OCI-LY7 (cell line): ENCODE measurements at regions of chr11 and their contacts with region 1.

Region 1: GRCh38 chr11:111565114-111565720 is 24.7 kb downstream of the LAYN start:
- DNase-seq: peak; percentile 83
- H3K4me3 ChIP-seq: no peak overlapping the region
- H3K27ac ChIP-seq: no peak overlapping the region
- H3K4me1 ChIP-seq: no peaks in the 10 kb centered on the region
- CTCF ChIP-seq: peak; percentile 93

Region 2: DNA sequence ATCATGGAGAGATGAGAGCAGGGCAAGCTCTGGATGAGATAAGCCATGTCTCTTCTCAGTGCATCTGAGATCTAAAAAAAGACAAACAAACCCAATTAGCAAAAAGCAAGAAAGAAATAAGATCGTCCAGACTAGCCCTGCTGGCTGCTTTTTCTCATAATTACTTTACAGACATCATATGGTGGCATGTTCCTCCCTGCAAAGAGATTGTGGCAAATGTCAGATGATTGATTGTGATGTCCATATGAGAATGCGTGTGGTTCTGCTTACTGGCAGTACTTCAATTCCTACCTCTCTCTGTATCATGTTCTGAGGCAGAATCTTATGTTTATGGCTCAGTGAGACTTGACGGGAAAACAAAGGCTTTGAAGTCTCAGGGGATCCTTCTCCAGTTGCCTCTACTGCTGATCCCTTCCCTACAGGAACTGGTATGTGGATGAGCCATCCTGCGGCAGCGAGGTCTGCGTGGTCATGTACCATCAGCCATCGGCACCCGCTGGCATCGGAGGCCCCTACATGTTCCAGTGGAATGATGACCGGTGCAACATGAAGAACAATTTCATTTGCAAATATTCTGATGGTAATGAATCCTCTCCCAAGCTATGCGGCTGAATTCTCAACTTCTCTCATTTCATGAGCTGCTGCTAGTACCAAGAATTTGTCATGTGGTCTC is 15.9 kb before region 1 on chr11:
- CTCF ChIA-PET with region 1: no interaction called
- POLR2A ChIA-PET with region 1: interaction called, 10 read pairs
- intact Hi-C with region 1: no loop called
- DNase-seq: no peak
- H3K4me3 ChIP-seq: no peak overlapping the region
- H3K27ac ChIP-seq: no peak overlapping the region
- H3K4me1 ChIP-seq: peaks cover 11% of the 10 kb centered on the region
- CTCF ChIP-seq: no peak

Region 3: GRCh38 chr11:111575740-111576139 is 10.5 kb after region 1 on chr11:
- CTCF ChIA-PET with region 1: no interaction called
- POLR2A ChIA-PET with region 1: no interaction called
- intact Hi-C with region 1: no loop called
- DNase-seq: no peak
- H3K4me3 ChIP-seq: no peak overlapping the region
- H3K27ac ChIP-seq: no peak overlapping the region
- H3K4me1 ChIP-seq: peaks cover 15% of the 10 kb centered on the region
- CTCF ChIP-seq: no peak

Region 4: DNA sequence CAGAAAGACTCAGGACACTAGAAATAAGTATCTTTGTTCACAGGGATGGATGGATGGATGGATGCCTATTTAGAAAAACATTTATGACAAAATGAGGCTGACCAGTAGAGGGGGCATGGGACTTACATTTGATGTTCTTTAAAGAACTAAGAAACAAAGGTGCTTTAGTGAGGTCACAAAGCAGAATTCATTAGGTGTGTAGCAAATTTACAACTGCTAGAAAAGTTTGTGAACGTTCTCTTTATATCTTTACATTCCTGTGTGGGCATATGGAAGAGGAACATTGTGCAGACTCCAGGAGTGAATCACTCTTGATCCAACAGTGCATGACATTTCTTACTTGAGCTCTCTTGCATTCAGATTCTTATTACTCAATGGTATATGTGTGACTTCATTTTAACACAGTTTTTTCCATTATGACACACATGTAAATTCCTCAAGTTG is 21.2 kb after region 1 on chr11:
- CTCF ChIA-PET with region 1: no interaction called
- POLR2A ChIA-PET with region 1: interaction called, 3 read pairs
- intact Hi-C with region 1: loop called (anchors 2 kb)
- DNase-seq: peak; percentile 78
- H3K4me3 ChIP-seq: no peak overlapping the region
- H3K27ac ChIP-seq: no peak overlapping the region
- H3K4me1 ChIP-seq: peaks cover 25% of the 10 kb centered on the region
- CTCF ChIP-seq: peak; percentile 94

Region 5: DNA sequence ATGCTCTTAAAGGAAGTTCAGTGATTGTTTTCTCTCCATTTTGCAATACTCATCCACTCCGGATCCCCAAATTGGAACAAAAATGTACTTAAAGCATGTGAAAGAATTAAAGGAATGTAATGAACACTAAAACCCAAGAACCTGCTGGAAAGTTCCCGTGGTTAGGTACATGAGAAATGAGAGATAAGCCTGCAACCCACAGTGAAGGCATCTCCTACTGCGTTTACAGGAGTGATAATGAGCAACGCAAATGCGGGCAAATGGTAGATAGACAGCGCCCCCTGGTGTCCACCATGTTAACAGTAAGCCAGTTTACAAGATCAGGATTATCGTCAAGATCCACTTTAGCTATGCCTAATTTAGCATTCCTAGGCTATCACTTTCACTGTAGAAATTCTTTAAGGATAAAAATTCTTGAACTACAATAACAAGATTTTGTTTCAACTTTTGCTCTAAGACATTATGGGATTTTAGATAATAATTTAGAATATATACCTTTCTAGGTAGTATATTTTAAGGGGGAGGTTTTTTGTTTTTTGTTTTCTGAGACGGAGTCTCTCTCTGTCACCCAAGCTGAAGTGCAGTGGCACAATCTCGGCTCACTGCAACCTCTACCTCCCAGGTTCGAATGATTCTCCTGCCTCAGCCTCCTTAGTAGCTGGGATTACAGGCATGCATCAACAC is 276.3 kb after region 1 on chr11:
- CTCF ChIA-PET with region 1: no interaction called
- POLR2A ChIA-PET with region 1: interaction called, 3 read pairs
- intact Hi-C with region 1: loop called (anchors 1 kb)
- DNase-seq: peak; percentile 85
- H3K4me3 ChIP-seq: no peak overlapping the region
- H3K27ac ChIP-seq: no peak overlapping the region
- H3K4me1 ChIP-seq: no peaks in the 10 kb centered on the region
- CTCF ChIP-seq: peak; percentile 98

Region 6: GRCh38 chr11:112082729-112083128 is 517.5 kb after region 1 on chr11:
- CTCF ChIA-PET with region 1: no interaction called
- POLR2A ChIA-PET with region 1: no interaction called
- intact Hi-C with region 1: no loop called
- DNase-seq: no peak
- H3K4me3 ChIP-seq: no peak overlapping the region
- H3K27ac ChIP-seq: no peak overlapping the region
- H3K4me1 ChIP-seq: peaks cover 13% of the 10 kb centered on the region
- CTCF ChIP-seq: no peak